ENCODE measurements at regions of chr22 and their contacts with region 1.

Region 1: GRCh38 chr22:37472418-37473006 is 13.7 kb downstream of the MFNG start:
- DNase-seq: peak; percentile 53
- ATAC-seq: no peak
- H3K4me3 ChIP-seq: no peak overlapping the region
- H3K4me3 Mint-ChIP-seq: no peak overlapping the region
- H3K27ac ChIP-seq: no peak overlapping the region
- H3K27ac Mint-ChIP-seq: no peak overlapping the region
- H3K4me1 ChIP-seq: no peaks in the 10 kb centered on the region
- H3K4me1 Mint-ChIP-seq: peaks cover 10% of the 10 kb centered on the region
- H3K27me3 ChIP-seq: no peaks in the 10 kb centered on the region
- H3K27me3 Mint-ChIP-seq: no peaks in the 10 kb centered on the region
- CTCF ChIP-seq: peak; percentile 60

Region 2: DNA sequence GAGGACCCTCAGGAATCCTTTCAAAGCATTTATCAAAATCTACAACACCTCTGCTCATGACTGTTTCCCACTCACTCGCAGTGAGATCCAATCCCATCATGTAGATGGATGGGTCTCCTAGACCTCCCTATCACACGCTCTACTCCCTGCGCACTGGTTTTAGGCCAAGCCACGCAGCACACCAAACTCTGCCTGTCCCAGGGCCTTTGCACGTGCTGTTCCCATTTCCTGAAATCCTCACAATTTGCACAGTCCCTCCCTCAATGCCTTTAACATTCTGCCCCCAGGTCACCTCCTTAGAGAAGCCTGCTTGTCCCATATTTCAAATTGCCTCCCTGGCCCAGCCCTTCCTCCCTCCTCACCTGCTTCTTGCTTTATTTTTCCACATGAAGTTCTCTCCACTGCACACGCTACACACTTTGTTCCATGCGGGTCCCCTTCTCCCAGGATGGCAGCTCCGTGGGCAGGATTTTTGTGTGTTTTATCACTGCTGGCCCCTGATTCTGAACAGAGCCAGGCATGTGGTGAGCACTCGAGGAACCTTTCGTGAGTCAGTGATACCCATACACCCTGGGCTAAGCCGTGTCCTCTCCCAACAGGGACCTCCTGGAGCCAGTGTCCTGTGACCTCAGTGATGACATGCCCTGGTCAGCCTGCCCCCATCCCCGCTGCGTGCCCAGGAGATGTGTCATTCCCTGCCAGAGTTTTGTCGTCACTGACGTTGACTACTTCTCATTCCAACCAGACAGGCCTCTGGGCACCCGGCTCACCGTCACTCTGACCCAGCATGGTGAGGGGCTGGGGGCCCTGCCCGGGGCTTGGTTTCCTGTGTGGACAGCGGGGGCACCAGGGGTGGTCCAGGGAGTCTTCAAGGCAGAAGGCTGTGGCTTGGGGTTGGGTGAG is 546.9 kb before region 1 on chr22:
- CTCF ChIA-PET with region 1: no interaction called
- POLR2A ChIA-PET with region 1: no interaction called
- intact Hi-C with region 1: no loop called
- DNase-seq: no peak
- ATAC-seq: no peak
- H3K4me3 ChIP-seq: no peak overlapping the region
- H3K4me3 Mint-ChIP-seq: no peak overlapping the region
- H3K27ac ChIP-seq: no peak overlapping the region
- H3K27ac Mint-ChIP-seq: peak overlapping the region; percentile 47
- H3K4me1 ChIP-seq: peaks cover 11 to 14% of the 10 kb centered on the region in 2 donors
- H3K4me1 Mint-ChIP-seq: peaks cover 14% of the 10 kb centered on the region
- H3K27me3 ChIP-seq: no peaks in the 10 kb centered on the region
- H3K27me3 Mint-ChIP-seq: no peaks in the 10 kb centered on the region
- CTCF ChIP-seq: no peak

Region 3: DNA sequence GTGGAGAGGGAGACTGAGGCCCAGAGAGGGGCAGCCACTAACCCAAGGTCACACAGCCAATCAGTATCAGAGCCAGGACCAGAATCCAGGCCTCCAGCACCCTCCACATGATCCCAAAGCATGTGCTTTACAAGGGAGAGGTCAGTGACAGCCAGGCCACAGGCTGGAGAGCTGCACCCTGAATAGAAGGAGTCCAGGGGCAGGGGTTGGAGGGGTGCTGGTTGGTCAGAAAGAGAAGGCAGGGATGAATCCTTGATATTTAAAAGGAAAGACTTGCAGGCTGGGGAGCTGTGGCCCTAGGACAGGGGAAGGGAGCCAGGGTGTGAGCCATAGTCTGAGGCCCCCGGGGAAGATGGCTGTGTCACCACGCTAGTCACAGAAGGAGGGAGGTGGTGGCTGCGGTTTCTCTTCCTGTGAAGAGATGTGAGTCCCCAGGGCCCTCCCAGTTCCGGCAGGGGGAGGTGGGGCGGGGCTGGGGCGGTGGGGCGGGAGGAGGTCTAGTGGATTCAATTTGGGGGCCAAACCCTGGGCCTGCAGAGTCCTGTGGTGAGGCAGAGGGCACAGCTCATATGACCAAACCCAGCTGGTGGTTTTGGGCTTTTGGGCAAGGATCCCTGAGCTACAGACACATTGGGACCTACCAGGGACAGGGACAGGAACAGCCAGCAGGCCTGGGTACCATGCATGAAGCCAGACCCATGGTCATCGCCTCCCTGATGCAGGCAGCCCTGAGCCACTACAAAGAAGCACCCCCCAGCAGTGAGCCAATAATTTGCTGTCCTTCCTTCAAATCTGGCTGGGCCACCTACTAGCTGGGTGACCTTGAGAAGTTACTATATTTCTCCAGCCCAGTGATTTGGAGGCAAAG is 242.5 kb before region 1 on chr22:
- CTCF ChIA-PET with region 1: no interaction called
- POLR2A ChIA-PET with region 1: no interaction called
- intact Hi-C with region 1: no loop called
- DNase-seq: peak; percentile 85
- ATAC-seq: peak; percentile 87
- H3K4me3 ChIP-seq: peak overlapping the region; percentile 13 to 30 (median 18)
- H3K4me3 Mint-ChIP-seq: peak overlapping the region; percentile 86
- H3K27ac ChIP-seq: peak overlapping the region; percentile 91 to 96
- H3K27ac Mint-ChIP-seq: peak overlapping the region; percentile 100
- H3K4me1 ChIP-seq: peaks cover 85 to 95% of the 10 kb centered on the region in 2 donors
- H3K4me1 Mint-ChIP-seq: peaks cover 88% of the 10 kb centered on the region
- H3K27me3 ChIP-seq: no peaks in the 10 kb centered on the region
- H3K27me3 Mint-ChIP-seq: no peaks in the 10 kb centered on the region
- CTCF ChIP-seq: no peak

Region 4: GRCh38 chr22:37486224-37486845 is 13.8 kb after region 1 on chr22 and contains the start of gene MFNG:
- CTCF ChIA-PET with region 1: interaction called, 103 read pairs
- POLR2A ChIA-PET with region 1: interaction called, 5 read pairs
- intact Hi-C with region 1: loop called (anchors 1 kb)
- DNase-seq: peak; percentile 86
- ATAC-seq: peak; percentile 78
- H3K4me3 ChIP-seq: peak within 1 kb of the TSS; percentile 63 to 91 (median 80)
- H3K4me3 Mint-ChIP-seq: peak within 1 kb of the TSS; percentile 98
- H3K27ac ChIP-seq: peak within 1 kb of the TSS; percentile 70 to 93
- H3K27ac Mint-ChIP-seq: peak within 1 kb of the TSS; percentile 98
- H3K4me1 ChIP-seq: peaks cover 24 to 47% of the 10 kb centered on the region in 2 donors
- H3K4me1 Mint-ChIP-seq: peaks cover 55% of the 10 kb centered on the region
- H3K27me3 ChIP-seq: no peaks in the 10 kb centered on the region
- H3K27me3 Mint-ChIP-seq: no peaks in the 10 kb centered on the region
- CTCF ChIP-seq: no peak
- total RNA-seq, gene MFNG: 95.9 and 109 TPM in 2 replicates

Region 5: GRCh38 chr22:37492428-37493344 is 20.2 kb after region 1 on chr22:
- CTCF ChIA-PET with region 1: interaction called, 103 read pairs
- POLR2A ChIA-PET with region 1: interaction called, 3 read pairs
- intact Hi-C with region 1: no loop called
- DNase-seq: peak; percentile 60
- ATAC-seq: peak; percentile 70
- H3K4me3 ChIP-seq: no peak overlapping the region
- H3K4me3 Mint-ChIP-seq: no peak overlapping the region
- H3K27ac ChIP-seq: no peak overlapping the region
- H3K27ac Mint-ChIP-seq: peak overlapping the region; percentile 59
- H3K4me1 ChIP-seq: peaks cover 0 to under 1% of the 10 kb centered on the region in 2 donors
- H3K4me1 Mint-ChIP-seq: peaks cover 16% of the 10 kb centered on the region
- H3K27me3 ChIP-seq: peaks cover 0 to 4% (median 0%) of the 10 kb centered on the region in 4 experiments
- H3K27me3 Mint-ChIP-seq: peaks cover 3% of the 10 kb centered on the region
- CTCF ChIP-seq: peak; percentile 52

Region 6: GRCh38 chr22:37503850-37504249 is 31.3 kb after region 1 on chr22:
- CTCF ChIA-PET with region 1: interaction called, 103 read pairs
- POLR2A ChIA-PET with region 1: no interaction called
- intact Hi-C with region 1: no loop called
- DNase-seq: no peak
- ATAC-seq: no peak
- H3K4me3 ChIP-seq: no peak overlapping the region
- H3K4me3 Mint-ChIP-seq: no peak overlapping the region
- H3K27ac ChIP-seq: no peak overlapping the region
- H3K27ac Mint-ChIP-seq: no peak overlapping the region
- H3K4me1 ChIP-seq: no peaks in the 10 kb centered on the region
- H3K4me1 Mint-ChIP-seq: no peaks in the 10 kb centered on the region
- H3K27me3 ChIP-seq: peaks cover 0 to 21% (median 1%) of the 10 kb centered on the region in 4 experiments
- H3K27me3 Mint-ChIP-seq: peaks cover 15% of the 10 kb centered on the region
- CTCF ChIP-seq: no peak

Region 7: DNA sequence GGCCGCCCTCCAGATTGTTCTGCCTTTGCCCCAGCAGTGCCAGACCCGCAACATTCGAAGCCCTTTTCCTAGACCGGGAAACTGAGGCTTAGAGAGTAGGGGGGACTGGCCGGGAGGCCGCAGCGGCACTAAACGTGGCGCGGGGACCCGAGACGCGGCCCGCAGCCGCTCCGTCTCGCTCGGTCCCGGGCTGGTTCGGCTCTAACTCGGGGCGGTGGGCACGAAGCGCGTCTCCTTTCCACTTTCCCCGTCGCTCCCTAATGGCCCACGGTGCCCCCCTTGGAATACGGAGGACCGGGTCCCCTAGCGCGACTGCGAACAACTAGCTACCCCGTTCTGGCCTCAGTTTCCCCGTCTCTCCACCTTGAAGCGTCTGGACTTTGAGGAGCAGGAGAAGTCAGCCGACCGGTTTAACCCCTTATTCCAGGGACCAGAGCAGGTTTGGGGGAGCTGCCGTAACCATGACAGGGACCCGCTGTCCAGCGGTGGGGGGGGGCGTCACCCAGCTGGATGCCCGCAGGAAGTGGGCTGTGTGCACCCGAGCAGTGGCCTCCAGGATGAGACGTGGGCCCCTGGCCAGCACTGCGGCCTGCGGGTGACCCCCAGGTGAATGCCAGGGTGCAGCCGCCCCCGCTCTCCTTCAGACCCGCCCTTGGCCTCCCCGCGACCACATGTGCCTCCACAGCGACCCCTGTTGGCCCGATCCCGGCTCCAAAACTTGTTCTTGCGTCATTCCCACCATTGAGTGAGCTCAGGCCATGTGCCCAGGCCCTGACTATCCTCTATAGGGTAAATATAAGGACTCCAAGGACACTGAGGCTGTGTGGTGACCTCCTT is 88.9 kb after region 1 on chr22:
- CTCF ChIA-PET with region 1: interaction called, 56 read pairs
- POLR2A ChIA-PET with region 1: no interaction called
- intact Hi-C with region 1: no loop called
- DNase-seq: peak; percentile 82
- ATAC-seq: peak; percentile 54
- H3K4me3 ChIP-seq: peak overlapping the region in 4 of 5 experiments; percentile 17 to 65 (median 39)
- H3K4me3 Mint-ChIP-seq: peak overlapping the region; percentile 78
- H3K27ac ChIP-seq: no peak overlapping the region
- H3K27ac Mint-ChIP-seq: peak overlapping the region; percentile 67
- H3K4me1 ChIP-seq: peaks cover 27 to 32% of the 10 kb centered on the region in 2 donors
- H3K4me1 Mint-ChIP-seq: peaks cover 26% of the 10 kb centered on the region
- H3K27me3 ChIP-seq: peaks cover 0 to 61% (median 25%) of the 10 kb centered on the region in 4 experiments
- H3K27me3 Mint-ChIP-seq: peaks cover 43% of the 10 kb centered on the region
- CTCF ChIP-seq: peak; percentile 77

Region 8: GRCh38 chr22:38755911-38756532 is 1283.5 kb after region 1 on chr22 and contains the start of gene SUN2:
- CTCF ChIA-PET with region 1: no interaction called
- POLR2A ChIA-PET with region 1: no interaction called
- intact Hi-C with region 1: no loop called
- DNase-seq: peak; percentile 94
- ATAC-seq: peak; percentile 74
- H3K4me3 ChIP-seq: peak within 1 kb of the TSS; percentile 59 to 97 (median 82)
- H3K4me3 Mint-ChIP-seq: peak within 1 kb of the TSS; percentile 100
- H3K27ac ChIP-seq: peak within 1 kb of the TSS; percentile 71 to 81
- H3K27ac Mint-ChIP-seq: peak within 1 kb of the TSS; percentile 99
- H3K4me1 ChIP-seq: peaks cover 63 to 82% of the 10 kb centered on the region in 2 donors
- H3K4me1 Mint-ChIP-seq: peaks cover 65% of the 10 kb centered on the region
- H3K27me3 ChIP-seq: no peaks in the 10 kb centered on the region
- H3K27me3 Mint-ChIP-seq: no peaks in the 10 kb centered on the region
- CTCF ChIP-seq: no peak
- total RNA-seq, gene SUN2: 305 and 322 TPM in 2 replicates